Upper lobe of right lung (tissue), 1 donor: ENCODE measurements at regions of chr12 and their contacts with region 1.

Region 1: DNA sequence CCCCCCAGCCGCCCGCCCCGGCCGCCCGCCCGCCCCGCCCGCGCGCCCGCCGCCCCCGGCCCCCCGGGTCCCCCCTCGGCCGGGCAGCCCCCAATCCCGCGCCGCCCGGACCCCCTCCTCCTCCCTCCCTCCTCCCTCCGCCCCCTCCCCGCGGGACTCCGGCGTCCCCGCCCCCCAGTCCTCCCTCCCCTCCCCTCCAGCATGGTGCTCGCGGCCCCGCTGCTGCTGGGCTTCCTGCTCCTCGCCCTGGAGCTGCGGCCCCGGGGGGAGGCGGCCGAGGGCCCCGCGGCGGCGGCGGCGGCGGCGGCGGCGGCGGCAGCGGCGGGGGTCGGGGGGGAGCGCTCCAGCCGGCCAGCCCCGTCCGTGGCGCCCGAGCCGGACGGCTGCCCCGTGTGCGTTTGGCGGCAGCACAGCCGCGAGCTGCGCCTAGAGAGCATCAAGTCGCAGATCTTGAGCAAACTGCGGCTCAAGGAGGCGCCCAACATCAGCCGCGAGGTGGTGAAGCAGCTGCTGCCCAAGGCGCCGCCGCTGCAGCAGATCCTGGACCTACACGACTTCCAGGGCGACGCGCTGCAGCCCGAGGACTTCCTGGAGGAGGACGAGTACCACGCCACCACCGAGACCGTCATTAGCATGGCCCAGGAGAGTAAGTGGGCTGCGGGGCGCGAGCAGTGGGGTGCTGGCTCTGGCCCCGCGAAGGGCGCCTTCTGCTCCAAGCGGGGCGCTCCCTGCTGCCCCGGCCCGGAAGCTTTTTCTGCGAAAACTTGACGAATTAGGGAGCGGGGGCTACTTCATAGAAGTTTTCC is at the start of gene GDF11:
- DNase-seq: peak; percentile 84
- ATAC-seq: peak; percentile 69
- H3K4me3 ChIP-seq: peak within 1 kb of the TSS; percentile 65
- H3K27ac ChIP-seq: peak within 1 kb of the TSS; percentile 42
- H3K4me1 ChIP-seq: peaks cover 10% of the 10 kb centered on the region
- H3K27me3 ChIP-seq: no peaks in the 10 kb centered on the region
- CTCF ChIP-seq: peak; percentile 13
- total RNA-seq, gene GDF11: 5.8 TPM

Region 2: GRCh38 chr12:55797068-55797467 is 53.7 kb after region 1 on chr12:
- intact Hi-C with region 1: loop called (anchors 10 kb)
- DNase-seq: no peak
- ATAC-seq: peak; percentile 45
- H3K4me3 ChIP-seq: no peak overlapping the region
- H3K27ac ChIP-seq: no peak overlapping the region
- H3K4me1 ChIP-seq: no peaks in the 10 kb centered on the region
- H3K27me3 ChIP-seq: no peaks in the 10 kb centered on the region
- CTCF ChIP-seq: peak; percentile 38